ENCODE measurements at regions of chr20 and their contacts with region 1.

Region 1: DNA sequence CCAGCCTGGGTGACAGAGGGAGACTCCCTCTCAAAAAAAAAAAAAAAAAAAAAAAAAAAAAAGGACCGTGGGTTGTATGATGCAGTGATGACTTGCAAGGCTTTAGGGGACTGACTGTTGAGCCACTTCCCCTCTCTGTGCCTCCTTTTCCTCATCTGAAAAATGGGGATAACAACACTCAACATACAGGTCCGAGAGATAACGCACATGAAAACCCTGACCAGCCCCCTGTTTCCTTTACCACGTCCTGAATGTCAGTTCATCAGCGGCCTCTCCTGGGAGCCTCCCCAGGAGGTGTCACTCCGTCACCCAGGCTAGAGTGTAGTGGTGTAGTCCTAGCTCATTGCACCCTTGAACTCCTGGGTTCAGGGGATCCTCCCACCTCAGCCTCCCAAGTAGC is 3.9 kb downstream of the SLA2 start:
- DNase-seq: no peak
- H3K4me3 ChIP-seq: no peak overlapping the region
- H3K27ac ChIP-seq: no peak overlapping the region
- H3K27me3 ChIP-seq: no peaks in the 10 kb centered on the region
- CTCF ChIP-seq: no peak

Region 2: GRCh38 chr20:36951198-36951976 is 309.3 kb after region 1 on chr20 and contains the start of gene SAMHD1:
- CTCF ChIA-PET with region 1: interaction called, 10 read pairs
- POLR2A ChIA-PET with region 1: no interaction called
- DNase-seq: peak; percentile 98
- H3K4me3 ChIP-seq: peak within 1 kb of the TSS; percentile 99
- H3K27ac ChIP-seq: no peak within 1 kb of the TSS
- H3K27me3 ChIP-seq: no peaks in the 10 kb centered on the region
- CTCF ChIP-seq: no peak
- polyA plus RNA-seq, gene SAMHD1: 19.4 and 25.2 TPM in 2 replicates